ENCODE measurements at regions of chr12 and their contacts with region 1.

Region 1: GRCh38 chr12:14605401-14605989 is 37.8 kb upstream of the PLBD1 start:
- DNase-seq: no peak
- ATAC-seq: no peak
- H3K4me3 Mint-ChIP-seq: no peak overlapping the region
- H3K27ac Mint-ChIP-seq: no peak overlapping the region
- H3K4me1 Mint-ChIP-seq: no peaks in the 10 kb centered on the region
- H3K27me3 Mint-ChIP-seq: peaks cover 12% of the 10 kb centered on the region

Region 2: DNA sequence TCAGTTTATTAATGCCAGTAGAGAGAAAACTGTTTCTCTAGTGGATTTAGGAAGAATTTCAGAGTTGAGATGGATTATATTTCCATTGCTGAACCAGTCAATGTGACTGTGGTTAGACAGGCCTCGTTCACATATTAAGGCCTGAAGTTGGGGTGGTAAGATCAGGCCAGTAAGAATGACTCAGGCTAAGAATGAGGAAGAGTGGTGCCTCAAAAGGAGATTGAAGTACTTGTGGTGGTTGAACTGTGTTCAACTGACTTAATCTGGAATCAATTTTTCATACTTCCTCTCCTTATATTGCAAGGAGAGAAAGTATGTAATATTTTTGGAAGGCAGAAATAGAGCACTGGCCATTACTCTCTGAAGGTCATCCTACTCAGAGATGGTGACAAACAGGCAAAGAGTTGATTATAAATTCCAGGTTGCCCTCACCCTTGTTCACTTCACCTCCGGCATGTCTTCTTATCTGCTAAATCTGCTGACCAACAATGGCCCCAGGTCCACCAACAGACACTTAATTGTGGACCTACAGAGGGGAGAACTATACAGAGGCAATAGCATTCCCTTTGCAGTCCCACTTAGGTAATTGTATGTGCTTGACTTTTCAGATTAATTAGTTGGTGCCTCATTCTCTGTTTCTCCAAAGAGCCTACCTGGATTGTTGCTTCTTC is 277.6 kb before region 1 on chr12:
- CTCF ChIA-PET with region 1: no interaction called
- POLR2A ChIA-PET with region 1: no interaction called
- intact Hi-C with region 1: loop called in 1 of 2 experiments (anchors 10 kb)
- DNase-seq: no peak
- ATAC-seq: no peak
- H3K4me3 Mint-ChIP-seq: no peak overlapping the region
- H3K27ac Mint-ChIP-seq: no peak overlapping the region
- H3K4me1 Mint-ChIP-seq: no peaks in the 10 kb centered on the region
- H3K27me3 Mint-ChIP-seq: no peaks in the 10 kb centered on the region

Measured in activated CD4-positive, alpha-beta T cell treated with anti-CD3 and anti-CD28 coated beads for 36 hours (primary cell).